ENCODE measurements at regions of chr11 and their contacts with region 1.

Region 1: GRCh38 chr11:65817835-65818742 is 15.7 kb upstream of the SNX32 start:
- DNase-seq: peak; percentile 87 to 97 (median 93)
- H3K4me3 ChIP-seq: peak overlapping the region; percentile 62
- H3K4me3 Mint-ChIP-seq: peak overlapping the region; percentile 74 to 85 (median 81)
- H3K27ac ChIP-seq: peak overlapping the region; percentile 53
- H3K27ac Mint-ChIP-seq: peak overlapping the region in 7 of 8 donors; percentile 70 to 90 (median 77)
- H3K4me1 ChIP-seq: peaks cover 10% of the 10 kb centered on the region
- H3K4me1 Mint-ChIP-seq: peaks cover 8 to 11% (median 10%) of the 10 kb centered on the region in 3 donors
- H3K27me3 ChIP-seq: no peaks in the 10 kb centered on the region
- H3K27me3 Mint-ChIP-seq: no peaks in the 10 kb centered on the region

Region 2: GRCh38 chr11:65703846-65704245 is 114.2 kb before region 1 on chr11:
- CTCF ChIA-PET with region 1: interaction called, 11 read pairs
- POLR2A ChIA-PET with region 1: no interaction called
- DNase-seq: no peak
- H3K4me3 ChIP-seq: no peak overlapping the region
- H3K4me3 Mint-ChIP-seq: no peak overlapping the region
- H3K27ac ChIP-seq: no peak overlapping the region
- H3K27ac Mint-ChIP-seq: peak overlapping the region in 1 of 8 donors; percentile 63
- H3K4me1 ChIP-seq: no peaks in the 10 kb centered on the region
- H3K4me1 Mint-ChIP-seq: peaks cover 3 to 6% (median 5%) of the 10 kb centered on the region in 3 donors
- H3K27me3 ChIP-seq: no peaks in the 10 kb centered on the region
- H3K27me3 Mint-ChIP-seq: peaks cover 5 to 9% of the 10 kb centered on the region in 2 donors